ENCODE measurements at regions of chr5 and their contacts with region 1.

Region 1: DNA sequence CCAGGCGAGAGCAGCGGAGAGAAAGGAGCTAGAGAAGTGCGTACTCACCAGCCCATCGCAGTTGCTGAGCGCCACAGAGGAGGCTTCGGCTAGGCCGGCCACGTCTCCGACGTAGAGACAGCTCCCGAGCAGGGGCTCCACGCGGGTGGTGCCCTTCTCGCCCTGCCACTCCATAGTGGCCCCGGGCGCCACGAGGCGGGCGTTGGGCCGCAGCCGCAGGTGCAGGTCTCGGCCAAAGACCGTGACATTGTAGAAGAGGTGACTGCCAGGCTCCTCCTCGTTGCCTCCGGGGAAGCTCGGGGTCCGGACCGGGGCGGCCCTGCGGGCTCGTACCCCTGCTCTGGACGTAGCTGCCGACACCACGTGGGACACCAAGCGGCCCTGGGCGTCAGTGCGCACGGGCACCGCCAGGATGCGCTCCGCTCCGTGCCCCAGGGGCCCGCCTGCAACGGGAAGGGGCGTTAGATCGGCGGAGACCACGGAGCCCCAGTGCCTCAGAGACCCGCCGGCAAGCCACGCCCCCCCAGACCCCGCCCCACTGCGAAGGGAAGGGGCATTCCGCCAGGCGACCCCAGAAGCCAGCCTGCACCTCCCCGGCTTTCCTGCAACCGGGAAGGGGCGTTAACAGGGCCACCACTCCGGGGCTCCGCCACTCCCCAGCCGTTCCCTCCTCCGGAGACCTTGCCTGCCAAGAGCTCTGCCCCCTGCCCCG is 1.4 kb downstream of the ADAMTS2 start:
- DNase-seq: peak; percentile 90
- ATAC-seq: peak; percentile 77
- H3K4me3 Mint-ChIP-seq: peak overlapping the region; percentile 75
- H3K27ac Mint-ChIP-seq: no peak overlapping the region
- H3K4me1 Mint-ChIP-seq: peaks cover 24% of the 10 kb centered on the region
- H3K27me3 Mint-ChIP-seq: peaks cover 58% of the 10 kb centered on the region
- CTCF ChIP-seq: no peak; the same call in 1 of the 2 replicates

Region 2: DNA sequence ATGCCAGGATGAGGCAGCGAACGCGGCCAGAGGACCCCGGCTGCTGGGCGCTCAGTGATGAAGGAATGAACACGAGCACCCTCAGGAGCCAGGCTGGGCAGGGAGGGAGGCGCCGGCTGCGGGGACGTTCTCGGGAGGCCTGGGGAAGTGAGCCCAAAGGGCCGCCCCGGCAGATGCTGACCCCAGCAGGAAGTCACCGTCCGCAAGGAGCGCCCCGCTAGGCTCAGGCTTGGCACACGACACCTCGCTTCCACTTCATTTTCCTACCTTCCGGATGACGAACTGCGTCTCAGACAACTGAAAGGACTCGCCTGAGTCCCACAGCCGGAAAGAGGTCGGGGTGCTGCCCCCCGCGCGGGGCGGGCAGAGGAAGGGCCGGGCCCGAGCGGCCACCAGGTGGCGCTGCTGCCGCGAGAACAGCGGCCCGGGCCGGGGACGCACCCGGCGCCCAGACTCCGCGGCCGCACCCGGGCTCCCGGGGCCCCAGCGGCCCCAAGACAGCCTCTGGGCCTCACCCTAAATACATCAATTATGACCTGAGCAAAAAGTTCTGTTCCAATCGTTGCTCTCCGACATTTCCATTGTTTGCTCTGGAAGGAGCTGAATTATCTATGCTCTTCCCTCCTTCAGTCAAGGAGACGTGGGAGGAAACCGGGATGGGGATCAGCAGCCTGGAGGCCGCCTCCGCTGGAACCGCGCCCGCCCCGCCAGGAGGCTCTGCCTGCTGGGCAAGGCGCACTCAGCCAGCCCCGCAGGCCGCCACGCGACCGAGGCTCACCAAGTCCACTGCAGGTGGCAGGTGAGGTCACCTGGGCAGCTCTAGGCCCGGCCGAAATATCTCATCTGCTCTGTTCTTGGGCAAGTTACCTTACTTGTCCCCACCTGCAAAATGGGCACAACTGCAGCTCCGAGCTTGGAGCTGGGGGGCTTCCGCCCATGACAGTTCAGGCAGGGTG is 176.7 kb before region 1 on chr5:
- CTCF ChIA-PET with region 1: interaction called, 12 read pairs
- POLR2A ChIA-PET with region 1: no interaction called
- DNase-seq: peak; percentile 74
- ATAC-seq: peak; percentile 89
- H3K4me3 Mint-ChIP-seq: peak overlapping the region; percentile 40; the same call in 1 of the 2 replicates
- H3K27ac Mint-ChIP-seq: no peak overlapping the region
- H3K4me1 Mint-ChIP-seq: no peaks in the 10 kb centered on the region
- H3K27me3 Mint-ChIP-seq: no peaks in the 10 kb centered on the region; the same call in 1 of the 2 replicates
- CTCF ChIP-seq: peak; percentile 90

Region 3: GRCh38 chr5:179495906-179496455 is 152.1 kb after region 1 on chr5:
- CTCF ChIA-PET with region 1: interaction called, 10 read pairs
- POLR2A ChIA-PET with region 1: no interaction called
- DNase-seq: no peak
- ATAC-seq: no peak
- H3K4me3 Mint-ChIP-seq: no peak overlapping the region
- H3K27ac Mint-ChIP-seq: no peak overlapping the region
- H3K4me1 Mint-ChIP-seq: no peaks in the 10 kb centered on the region; the same call in 1 of the 2 replicates
- H3K27me3 Mint-ChIP-seq: no peaks in the 10 kb centered on the region
- CTCF ChIP-seq: no peak

Region 4: DNA sequence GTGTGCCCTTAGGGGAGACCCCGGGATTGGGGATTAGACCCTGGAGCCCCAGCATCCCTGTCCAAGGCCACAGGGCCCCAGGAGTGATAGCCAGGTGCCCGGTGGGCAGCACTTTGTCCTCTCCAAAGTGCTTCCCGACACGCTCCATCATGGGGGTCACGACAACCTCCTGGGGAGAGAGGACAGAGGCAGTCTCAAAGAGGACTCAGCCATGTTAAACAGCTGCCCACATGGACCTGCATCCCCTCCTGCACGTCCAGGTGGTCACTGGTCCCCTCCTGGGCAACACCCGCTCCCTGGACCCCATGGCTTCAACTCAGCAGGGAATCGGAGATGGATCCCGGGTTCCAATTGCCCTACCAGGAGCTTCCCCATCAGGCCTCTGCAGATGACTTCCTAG is 299.7 kb after region 1 on chr5:
- CTCF ChIA-PET with region 1: no interaction called
- POLR2A ChIA-PET with region 1: no interaction called
- DNase-seq: no peak
- ATAC-seq: no peak
- H3K4me3 Mint-ChIP-seq: no peak overlapping the region
- H3K27ac Mint-ChIP-seq: no peak overlapping the region
- H3K4me1 Mint-ChIP-seq: no peaks in the 10 kb centered on the region
- H3K27me3 Mint-ChIP-seq: no peaks in the 10 kb centered on the region; the same call in 1 of the 2 replicates
- CTCF ChIP-seq: no peak